CD4-positive, alpha-beta memory T cell (primary cell): ENCODE measurements at regions of chr18 and their contacts with region 1.

Region 1: DNA sequence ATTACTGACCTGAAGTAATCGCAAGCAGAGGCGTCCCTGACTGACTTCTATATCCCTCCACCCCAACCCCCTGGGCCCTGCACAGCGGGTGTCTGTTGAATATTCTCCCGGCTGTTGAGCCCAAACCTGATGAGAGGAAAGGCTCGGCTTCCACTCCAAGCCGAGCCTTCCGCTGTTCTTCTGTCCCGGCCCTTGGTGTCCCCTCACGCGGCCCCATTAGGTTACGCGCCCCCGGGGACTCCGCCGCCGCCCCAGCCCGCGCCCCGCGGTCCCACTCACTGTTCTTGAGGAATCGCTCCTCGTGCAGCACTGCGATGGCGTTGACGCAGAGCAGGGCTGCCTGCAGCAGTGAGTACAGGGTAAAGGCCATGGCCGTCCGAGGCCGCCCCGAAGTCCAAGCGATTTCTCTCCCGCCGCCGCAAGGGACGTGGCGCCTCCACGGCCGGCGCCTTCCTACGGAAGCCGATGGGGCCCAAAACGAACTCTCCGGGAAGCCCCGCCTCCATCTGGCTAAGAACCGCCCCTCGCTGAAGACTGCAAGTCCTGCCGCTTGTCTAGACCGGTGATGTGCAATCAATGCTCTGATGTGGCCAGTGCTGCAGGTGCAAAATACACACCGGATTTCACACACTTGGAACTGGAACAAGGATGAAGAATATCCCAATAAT is at the start of gene IER3IP1:
- DNase-seq: peak; percentile 84 to 89 (median 86)
- H3K4me3 ChIP-seq: peak within 1 kb of the TSS; percentile 63 to 86
- H3K4me3 Mint-ChIP-seq: peak within 1 kb of the TSS in 5 of 8 donors; percentile 10 to 66 (median 26)
- H3K27ac ChIP-seq: peak within 1 kb of the TSS; percentile 62
- H3K27ac Mint-ChIP-seq: peak within 1 kb of the TSS in 5 of 7 donors; percentile 5 to 92 (median 72)
- H3K4me1 ChIP-seq: peaks cover 32% of the 10 kb centered on the region
- H3K4me1 Mint-ChIP-seq: peaks cover 0 to 4% (median 2%) of the 10 kb centered on the region in 4 donors
- H3K27me3 ChIP-seq: no peaks in the 10 kb centered on the region
- H3K27me3 Mint-ChIP-seq: no peaks in the 10 kb centered on the region
- total RNA-seq, gene IER3IP1: 7.8 to 9.0 TPM

Region 2: GRCh38 chr18:47150029-47150823 is 25.8 kb before region 1 on chr18 and contains the start of gene HDHD2:
- CTCF ChIA-PET with region 1: no interaction called
- POLR2A ChIA-PET with region 1: interaction called, 16 read pairs
- intact Hi-C with region 1: loop called (anchors 1 kb)
- DNase-seq: peak; percentile 62 to 72 (median 69)
- H3K4me3 ChIP-seq: peak within 1 kb of the TSS; percentile 31 to 72
- H3K4me3 Mint-ChIP-seq: peak within 1 kb of the TSS; percentile 92 to 98 (median 96)
- H3K27ac ChIP-seq: peak within 1 kb of the TSS; percentile 70
- H3K27ac Mint-ChIP-seq: peak within 1 kb of the TSS; percentile 89 to 98 (median 97)
- H3K4me1 ChIP-seq: peaks cover 39% of the 10 kb centered on the region
- H3K4me1 Mint-ChIP-seq: peaks cover 35 to 61% (median 49%) of the 10 kb centered on the region in 4 donors
- H3K27me3 ChIP-seq: no peaks in the 10 kb centered on the region
- H3K27me3 Mint-ChIP-seq: no peaks in the 10 kb centered on the region
- total RNA-seq, gene HDHD2: 34.2 to 36.5 TPM

Region 3: DNA sequence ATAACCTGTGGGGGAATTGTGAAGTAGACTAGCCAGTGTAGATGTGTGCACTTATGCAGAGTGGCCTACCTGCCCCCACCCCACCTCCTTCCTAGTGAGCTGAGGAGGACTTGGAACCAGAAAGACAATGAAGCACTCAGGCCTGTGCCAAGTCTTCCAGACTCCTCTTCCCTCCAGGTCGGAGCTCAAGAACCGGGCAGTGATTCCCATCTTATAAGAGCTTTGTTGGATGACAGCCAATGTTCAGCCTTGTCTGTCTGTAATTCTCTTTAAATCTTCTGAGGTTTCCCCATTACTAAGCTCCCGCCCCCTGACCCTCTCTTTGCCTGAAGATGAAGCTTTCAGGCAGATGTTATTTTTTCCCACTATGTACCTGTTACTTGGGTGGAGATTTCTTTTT is 633.4 kb after region 1 on chr18:
- CTCF ChIA-PET with region 1: no interaction called
- POLR2A ChIA-PET with region 1: no interaction called
- intact Hi-C with region 1: no loop called
- DNase-seq: no peak
- H3K4me3 ChIP-seq: no peak overlapping the region
- H3K4me3 Mint-ChIP-seq: no peak overlapping the region
- H3K27ac ChIP-seq: no peak overlapping the region
- H3K27ac Mint-ChIP-seq: no peak overlapping the region
- H3K4me1 ChIP-seq: no peaks in the 10 kb centered on the region
- H3K4me1 Mint-ChIP-seq: no peaks in the 10 kb centered on the region
- H3K27me3 ChIP-seq: no peaks in the 10 kb centered on the region
- H3K27me3 Mint-ChIP-seq: peaks cover 0 to 2% of the 10 kb centered on the region in 2 donors